T-cell (primary cell): ENCODE measurements at regions of chr7 and their contacts with region 1.

Region 1: DNA sequence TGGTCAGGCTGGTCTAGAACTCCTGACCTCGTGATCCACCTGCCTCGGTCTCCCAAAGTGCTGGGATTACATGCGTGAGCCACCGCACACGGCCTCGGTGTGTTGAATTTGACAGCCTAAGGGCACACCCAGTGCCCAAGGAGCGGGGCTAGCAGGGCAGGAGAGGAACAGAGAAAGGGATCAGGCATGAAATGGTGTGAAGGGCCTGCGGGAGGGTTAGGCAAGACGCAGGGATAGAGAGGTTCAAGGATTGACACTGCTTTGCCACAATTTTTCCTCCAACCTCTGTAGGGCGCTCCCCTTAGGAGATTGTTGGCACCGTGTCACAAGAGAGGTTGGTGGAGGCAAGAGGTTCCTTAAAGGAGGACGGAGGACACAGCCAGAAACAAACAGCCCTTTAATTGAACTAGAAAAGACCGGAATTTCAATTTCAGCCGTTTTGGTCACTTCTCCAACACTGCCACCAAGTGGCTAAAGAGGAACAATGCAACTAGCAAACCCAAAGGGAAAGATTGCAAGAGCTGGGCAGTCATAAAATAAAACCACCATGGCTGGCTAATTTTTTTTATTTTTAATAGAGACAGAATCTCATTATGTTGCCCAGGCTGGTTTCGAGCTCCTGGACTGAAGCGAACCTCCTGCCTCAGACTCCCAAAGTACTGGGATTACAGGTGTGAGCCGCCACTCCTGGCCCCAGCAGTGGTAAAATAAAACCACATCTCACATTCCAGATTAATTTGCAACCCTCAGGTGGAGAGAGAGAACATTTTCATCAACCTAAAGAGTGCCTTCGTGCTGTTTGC is 6.9 kb upstream of the CREB3L2 start:
- DNase-seq: peak in 20 of 35 experiments; percentile 6 to 73 (median 18)
- ATAC-seq: peak in 3 of 4 experiments; percentile 30 to 60 (median 36)
- H3K4me3 ChIP-seq: no peak overlapping the region
- H3K4me3 Mint-ChIP-seq: no peak overlapping the region
- H3K27ac ChIP-seq: no peak overlapping the region
- H3K27ac Mint-ChIP-seq: no peak overlapping the region
- H3K4me1 ChIP-seq: peaks cover 0 to 3% of the 10 kb centered on the region in 2 experiments
- H3K4me1 Mint-ChIP-seq: peaks cover 5 to 15% (median 7%) of the 10 kb centered on the region in 3 donors
- H3K27me3 ChIP-seq: peaks cover 0 to 2% of the 10 kb centered on the region in 2 experiments
- H3K27me3 Mint-ChIP-seq: peaks cover 4 to 6% of the 10 kb centered on the region in 2 donors

Region 2: GRCh38 chr7:137337902-137338301 is 670.8 kb before region 1 on chr7:
- CTCF ChIA-PET with region 1: no interaction called
- POLR2A ChIA-PET with region 1: no interaction called
- DNase-seq: no peak
- ATAC-seq: no peak
- H3K4me3 ChIP-seq: no peak overlapping the region
- H3K4me3 Mint-ChIP-seq: no peak overlapping the region
- H3K27ac ChIP-seq: no peak overlapping the region
- H3K27ac Mint-ChIP-seq: no peak overlapping the region
- H3K4me1 ChIP-seq: no peaks in the 10 kb centered on the region
- H3K4me1 Mint-ChIP-seq: peaks cover 0 to 1% (median 0%) of the 10 kb centered on the region in 3 donors
- H3K27me3 ChIP-seq: no peaks in the 10 kb centered on the region
- H3K27me3 Mint-ChIP-seq: no peaks in the 10 kb centered on the region

Region 3: DNA sequence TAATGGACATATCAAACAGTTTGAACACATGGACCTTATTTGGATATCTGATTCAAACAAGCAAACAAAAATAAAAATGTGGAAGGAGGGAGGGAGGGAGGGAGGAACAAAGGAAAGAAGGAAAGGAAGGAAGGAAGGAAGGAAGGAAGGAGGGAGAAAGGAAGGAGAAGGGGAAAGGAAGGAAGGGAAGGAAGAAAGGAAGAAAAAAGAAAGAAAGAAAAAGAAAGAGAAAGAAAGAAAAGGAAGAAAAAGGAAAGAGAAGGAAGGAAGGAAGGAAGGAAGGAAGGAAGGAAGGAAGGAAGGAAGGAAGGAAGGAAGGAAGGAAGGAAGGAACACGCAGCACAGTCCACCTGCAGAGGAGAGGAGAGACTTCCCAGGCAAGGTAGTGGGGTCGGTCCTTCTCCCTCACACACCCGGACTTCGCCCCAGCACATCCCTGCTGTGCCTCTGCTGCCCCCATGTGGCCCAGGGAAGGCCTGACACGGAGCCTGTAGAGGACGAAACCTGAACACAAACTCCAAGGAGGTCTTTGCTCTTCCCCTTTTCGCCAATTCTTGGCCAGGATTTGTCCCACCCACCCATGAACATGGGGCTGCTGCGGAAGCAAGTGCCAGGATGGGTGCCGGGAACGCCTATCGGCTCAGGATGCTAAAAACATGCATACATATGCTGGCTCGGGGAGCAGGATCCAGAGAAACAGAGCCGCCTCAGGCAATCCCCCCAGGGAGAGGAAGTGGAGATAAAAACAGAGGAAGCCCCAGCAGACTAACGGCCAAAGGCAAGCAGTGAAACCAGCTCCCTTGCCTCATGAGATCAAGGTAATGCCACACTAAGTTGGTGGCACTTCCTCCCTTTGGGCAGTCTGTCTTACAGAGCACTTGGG is 109.7 kb before region 1 on chr7:
- CTCF ChIA-PET with region 1: interaction called, 163 to 207 read pairs
- POLR2A ChIA-PET with region 1: interaction called in 1 of 2 experiments, 4 read pairs
- DNase-seq: peak; percentile 33 to 81 (median 68)
- ATAC-seq: peak; percentile 92 to 96 (median 94)
- H3K4me3 ChIP-seq: peak overlapping the region in 1 of 2 donors; percentile 57
- H3K4me3 Mint-ChIP-seq: peak overlapping the region; percentile 36 to 63 (median 41)
- H3K27ac ChIP-seq: no peak overlapping the region
- H3K27ac Mint-ChIP-seq: peak overlapping the region; percentile 63 to 82
- H3K4me1 ChIP-seq: peaks cover 6 to 12% of the 10 kb centered on the region in 2 experiments
- H3K4me1 Mint-ChIP-seq: peaks cover 17 to 22% (median 19%) of the 10 kb centered on the region in 3 donors
- H3K27me3 ChIP-seq: no peaks in the 10 kb centered on the region
- H3K27me3 Mint-ChIP-seq: no peaks in the 10 kb centered on the region

Region 4: DNA sequence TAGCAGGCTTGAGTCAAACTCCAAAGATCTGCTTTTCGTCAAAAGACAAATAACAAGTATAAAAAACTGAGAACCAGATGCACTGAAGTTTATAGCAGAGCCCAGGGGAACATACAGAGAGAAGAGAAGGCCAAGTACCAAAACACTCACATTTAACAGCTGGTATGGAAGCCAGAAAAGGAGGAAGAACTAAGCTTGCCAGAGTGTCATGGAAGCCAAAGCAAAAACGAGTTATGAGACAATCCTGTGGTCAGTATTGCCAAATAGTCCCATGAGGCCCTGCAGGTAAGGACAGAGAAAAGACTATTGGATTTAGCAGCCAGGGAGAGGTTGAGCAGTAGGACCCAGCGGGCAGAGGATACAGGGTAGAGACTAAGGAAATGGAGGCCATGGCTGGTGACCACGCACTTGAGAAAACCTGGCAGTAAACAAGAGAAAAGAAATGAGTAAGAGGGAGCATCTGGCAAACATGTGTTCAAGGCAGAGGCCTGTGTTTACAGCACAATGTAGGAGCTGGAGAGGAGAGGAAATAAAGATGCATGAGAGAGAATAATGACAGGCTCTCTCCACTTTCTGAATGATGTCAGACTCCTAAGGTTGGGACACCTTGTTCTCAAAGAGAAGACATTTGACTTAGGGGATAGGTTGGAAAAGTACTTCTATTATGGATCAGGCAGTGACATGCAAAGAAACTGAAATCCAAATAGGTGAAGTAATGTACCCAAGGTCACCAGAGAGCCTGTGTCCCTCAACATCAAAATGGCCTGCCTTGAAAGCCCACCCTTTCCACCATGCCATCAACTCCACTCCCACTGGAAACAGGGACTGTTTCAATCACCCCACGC is 16.0 kb before region 1 on chr7:
- CTCF ChIA-PET with region 1: interaction called, 8 to 11 read pairs
- POLR2A ChIA-PET with region 1: no interaction called
- DNase-seq: no peak
- ATAC-seq: peak in 1 of 4 experiments; percentile 32
- H3K4me3 ChIP-seq: no peak overlapping the region
- H3K4me3 Mint-ChIP-seq: peak overlapping the region in 1 of 3 donors; percentile 1
- H3K27ac ChIP-seq: no peak overlapping the region
- H3K27ac Mint-ChIP-seq: peak overlapping the region; percentile 0 to 64
- H3K4me1 ChIP-seq: peaks cover 0 to 7% of the 10 kb centered on the region in 2 experiments
- H3K4me1 Mint-ChIP-seq: peaks cover 36 to 40% (median 38%) of the 10 kb centered on the region in 3 donors
- H3K27me3 ChIP-seq: no peaks in the 10 kb centered on the region
- H3K27me3 Mint-ChIP-seq: no peaks in the 10 kb centered on the region